Activated CD8-positive, alpha-beta T cell treated with anti-CD3 and anti-CD28 coated beads, Interleukin-2, amount 10 ng/mL, durations not matched to agents 7 days and 5 days (primary cell): ENCODE measurements at regions of chr17 and their contacts with region 1.

Region 1: GRCh38 chr17:65198653-65199382 is 61.6 kb downstream of the RGS9 start:
- DNase-seq: no peak
- ATAC-seq: peak; percentile 70
- H3K4me3 Mint-ChIP-seq: no peak overlapping the region
- H3K27ac Mint-ChIP-seq: no peak overlapping the region
- H3K4me1 Mint-ChIP-seq: peaks cover 6% of the 10 kb centered on the region
- H3K27me3 Mint-ChIP-seq: peaks cover 4% of the 10 kb centered on the region

Region 2: DNA sequence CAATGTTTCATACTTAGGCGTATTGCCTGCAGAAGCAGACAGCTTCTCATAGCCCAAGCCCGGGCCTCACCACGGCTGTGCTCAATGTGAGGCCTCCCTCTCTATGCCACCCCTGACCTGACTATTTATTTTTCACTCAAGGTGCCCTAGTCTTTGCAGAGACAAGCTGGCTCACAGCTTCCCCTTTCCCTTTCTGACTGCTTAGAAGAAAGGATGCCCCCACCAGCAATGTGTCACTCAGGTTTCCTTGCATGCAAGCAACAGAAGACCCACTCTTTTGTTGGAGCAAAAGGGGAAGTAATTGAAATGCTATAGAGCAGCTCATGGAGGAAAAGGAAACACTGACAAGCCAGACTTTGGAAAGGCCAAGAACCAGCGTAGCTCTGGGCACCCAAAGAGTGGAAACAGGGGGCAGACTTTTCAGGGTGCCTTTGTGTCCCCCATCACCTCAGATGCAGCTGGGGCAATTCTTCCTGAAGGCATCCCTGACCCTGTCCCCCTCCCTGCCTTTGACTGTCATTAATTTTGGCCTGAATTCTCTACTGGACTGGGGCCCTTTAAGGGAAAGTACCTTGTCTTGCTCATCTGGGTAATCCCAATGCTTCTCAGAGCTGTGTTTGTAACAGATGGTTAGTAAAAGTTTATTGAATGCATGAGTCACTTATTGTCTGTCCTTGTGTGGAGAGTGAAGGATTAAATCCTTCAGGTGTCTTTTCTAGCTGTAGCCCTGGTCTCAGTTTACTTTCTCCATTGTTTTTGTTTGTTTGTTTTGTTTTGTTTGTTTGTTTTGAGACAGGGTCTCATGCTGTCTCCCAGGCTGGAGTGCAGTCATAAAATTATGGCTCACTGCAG is 43.8 kb before region 1 on chr17:
- CTCF ChIA-PET with region 1: interaction called, 11 read pairs
- POLR2A ChIA-PET with region 1: no interaction called
- DNase-seq: no peak
- ATAC-seq: no peak
- H3K4me3 Mint-ChIP-seq: no peak overlapping the region
- H3K27ac Mint-ChIP-seq: no peak overlapping the region
- H3K4me1 Mint-ChIP-seq: peaks cover 14% of the 10 kb centered on the region
- H3K27me3 Mint-ChIP-seq: peaks cover 12% of the 10 kb centered on the region

Region 3: DNA sequence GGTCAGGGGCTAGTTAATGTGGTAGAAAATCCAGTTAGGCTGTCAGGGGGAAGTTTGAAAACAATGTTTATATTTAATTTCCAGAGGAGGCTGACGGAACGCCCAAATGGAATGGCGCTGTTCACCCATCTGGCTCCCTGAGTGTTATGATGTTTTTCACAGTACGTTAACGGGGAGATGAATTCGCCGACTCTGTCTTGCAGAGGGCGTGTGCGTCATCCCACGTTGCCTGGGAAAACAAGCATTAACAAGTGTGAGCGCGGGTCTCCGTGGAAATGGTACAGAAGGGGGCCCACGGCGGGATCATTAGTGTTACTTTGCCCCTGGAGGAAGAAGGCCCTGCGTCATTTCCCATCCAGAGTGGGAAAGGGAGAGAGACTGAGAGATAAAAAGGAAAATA is 32.0 kb before region 1 on chr17:
- CTCF ChIA-PET with region 1: no interaction called
- POLR2A ChIA-PET with region 1: no interaction called
- DNase-seq: no peak
- ATAC-seq: no peak
- H3K4me3 Mint-ChIP-seq: no peak overlapping the region
- H3K27ac Mint-ChIP-seq: no peak overlapping the region
- H3K4me1 Mint-ChIP-seq: peaks cover 25% of the 10 kb centered on the region
- H3K27me3 Mint-ChIP-seq: peaks cover 2% of the 10 kb centered on the region